ENCODE measurements at regions of chr16 and their contacts with region 1.

Region 1: DNA sequence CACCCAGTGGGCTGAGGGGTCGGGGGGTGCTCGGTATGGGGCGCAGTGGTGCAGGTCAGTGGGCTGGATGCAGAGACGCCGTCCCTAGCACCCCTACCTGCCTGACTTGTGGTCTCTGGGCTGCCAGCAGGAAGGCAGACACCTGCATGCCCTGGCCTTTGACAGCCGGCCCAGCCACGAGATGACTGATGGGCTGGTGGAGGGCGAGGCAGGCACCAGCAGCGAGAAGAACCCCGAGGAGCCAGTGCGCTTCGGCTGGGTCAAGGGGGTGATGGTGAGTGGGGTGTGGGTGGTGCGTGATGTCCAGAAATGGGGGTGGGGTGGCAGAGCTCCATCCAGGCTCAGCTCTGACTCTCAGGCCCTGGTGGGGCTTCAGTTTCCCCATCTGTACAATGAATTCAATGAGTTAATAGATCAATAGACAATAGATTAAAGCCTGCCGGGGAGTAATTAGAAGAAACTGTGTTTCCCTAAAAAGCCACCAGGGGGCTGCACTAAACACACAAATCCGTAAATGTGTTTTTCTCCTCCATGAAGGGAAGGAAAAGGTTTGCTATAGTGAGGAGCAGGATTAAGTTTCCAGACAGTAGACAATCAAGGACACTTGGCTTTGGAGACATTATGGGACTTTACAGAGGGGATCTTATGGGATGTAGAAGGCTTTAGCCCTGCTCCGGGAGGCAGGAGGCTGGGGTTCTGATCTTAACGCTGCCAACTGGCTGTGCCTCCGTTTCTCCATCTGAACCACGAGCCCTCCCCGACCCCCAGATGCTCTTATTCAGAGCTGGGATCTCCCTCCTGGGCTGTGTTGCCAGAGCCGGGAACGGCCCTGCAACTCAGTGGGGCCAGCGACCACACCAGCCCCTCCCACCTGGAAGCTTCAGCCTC is 2.2 kb downstream of the SLC12A3 start:
- DNase-seq: peak; percentile 32 to 35
- H3K4me3 ChIP-seq: no peak overlapping the region
- H3K27ac ChIP-seq: no peak overlapping the region
- H3K4me1 ChIP-seq: peaks cover 6 to 7% of the 10 kb centered on the region in 2 donors
- H3K27me3 ChIP-seq: no peaks in the 10 kb centered on the region
- CTCF ChIP-seq: peak; percentile 58 to 79 (median 71)
- POLR2A ChIP-seq: no peak

Region 2: DNA sequence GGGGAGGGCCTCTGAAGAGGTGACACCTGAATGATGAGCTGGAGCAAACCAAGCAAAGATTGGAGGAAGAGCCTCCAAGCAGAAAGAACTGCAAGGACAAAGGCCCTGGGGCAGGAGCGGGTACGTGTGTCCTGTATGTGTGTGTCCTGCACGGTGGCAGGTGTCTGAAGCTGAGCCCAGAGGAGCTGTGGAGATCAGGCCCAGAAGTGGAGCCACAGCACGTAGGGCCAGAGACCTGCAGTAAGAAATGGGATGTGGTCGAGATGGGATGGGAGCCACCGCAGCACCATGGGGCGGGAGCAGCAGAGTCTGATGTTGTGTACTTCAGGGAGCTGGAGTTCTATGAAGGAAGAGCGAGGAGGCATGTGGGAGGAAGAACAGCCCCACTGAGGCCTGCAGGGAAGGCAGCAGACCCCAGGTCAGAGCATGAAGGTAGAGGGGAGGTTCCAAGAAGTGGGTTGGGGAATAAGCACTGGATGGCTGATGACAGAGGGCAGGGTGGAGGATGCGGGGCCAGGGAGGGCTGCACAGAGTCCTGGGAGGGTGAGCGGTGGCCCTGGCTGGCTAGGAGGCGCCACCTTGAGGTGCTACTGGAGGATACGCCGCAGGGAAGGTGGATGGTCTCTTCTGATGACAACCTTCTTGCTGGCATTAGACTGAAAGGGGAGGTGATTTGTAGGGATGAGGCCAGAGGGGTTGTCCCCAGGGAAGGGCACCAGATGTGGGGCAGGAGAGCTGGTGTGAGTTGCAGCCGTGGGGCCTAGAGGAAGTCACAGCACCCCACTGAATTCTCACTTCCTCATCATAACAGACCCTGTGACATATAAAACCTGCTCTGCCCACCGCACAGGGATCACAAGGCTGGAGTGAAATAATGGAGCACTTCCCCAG is 83.9 kb after region 1 on chr16:
- intact Hi-C with region 1: loop called (anchors 5 kb)
- DNase-seq: peak; percentile 36 to 45
- H3K4me3 ChIP-seq: no peak overlapping the region
- H3K27ac ChIP-seq: no peak overlapping the region
- H3K4me1 ChIP-seq: no peaks in the 10 kb centered on the region
- H3K27me3 ChIP-seq: no peaks in the 10 kb centered on the region
- CTCF ChIP-seq: peak in 4 of 6 experiments; percentile 22 to 52 (median 50)
- POLR2A ChIP-seq: no peak

Region 3: GRCh38 chr16:57045694-57046381 is 178.7 kb after region 1 on chr16:
- intact Hi-C with region 1: loop called (anchors 10 kb)
- DNase-seq: peak; percentile 58 to 64
- H3K4me3 ChIP-seq: no peak overlapping the region
- H3K27ac ChIP-seq: no peak overlapping the region
- H3K4me1 ChIP-seq: no peaks in the 10 kb centered on the region
- H3K27me3 ChIP-seq: no peaks in the 10 kb centered on the region
- CTCF ChIP-seq: peak in 3 of 6 experiments; percentile 42 to 53 (median 48)
- POLR2A ChIP-seq: no peak

Measured in thyroid gland (tissue), 4 donors.